Psoas muscle (tissue), 8 donors: ENCODE measurements at regions of chr12 and their contacts with region 1.

Region 1: GRCh38 chr12:89212339-89212771 is 139.9 kb downstream of the DUSP6 start:
- DNase-seq: peak; percentile 20 to 46
- ATAC-seq: peak; percentile 28 to 76 (median 56)
- H3K4me3 ChIP-seq: no peak overlapping the region
- H3K27ac ChIP-seq: peak overlapping the region; percentile 41
- H3K4me1 ChIP-seq: peaks cover 14% of the 10 kb centered on the region
- H3K27me3 ChIP-seq: no peaks in the 10 kb centered on the region
- CTCF ChIP-seq: no peak

Region 2: GRCh38 chr12:88703790-88704189 is 508.6 kb before region 1 on chr12:
- intact Hi-C with region 1: no loop called
- DNase-seq: no peak
- ATAC-seq: no peak
- H3K4me3 ChIP-seq: no peak overlapping the region
- H3K27ac ChIP-seq: no peak overlapping the region
- H3K4me1 ChIP-seq: no peaks in the 10 kb centered on the region
- H3K27me3 ChIP-seq: no peaks in the 10 kb centered on the region
- CTCF ChIP-seq: no peak

Region 3: DNA sequence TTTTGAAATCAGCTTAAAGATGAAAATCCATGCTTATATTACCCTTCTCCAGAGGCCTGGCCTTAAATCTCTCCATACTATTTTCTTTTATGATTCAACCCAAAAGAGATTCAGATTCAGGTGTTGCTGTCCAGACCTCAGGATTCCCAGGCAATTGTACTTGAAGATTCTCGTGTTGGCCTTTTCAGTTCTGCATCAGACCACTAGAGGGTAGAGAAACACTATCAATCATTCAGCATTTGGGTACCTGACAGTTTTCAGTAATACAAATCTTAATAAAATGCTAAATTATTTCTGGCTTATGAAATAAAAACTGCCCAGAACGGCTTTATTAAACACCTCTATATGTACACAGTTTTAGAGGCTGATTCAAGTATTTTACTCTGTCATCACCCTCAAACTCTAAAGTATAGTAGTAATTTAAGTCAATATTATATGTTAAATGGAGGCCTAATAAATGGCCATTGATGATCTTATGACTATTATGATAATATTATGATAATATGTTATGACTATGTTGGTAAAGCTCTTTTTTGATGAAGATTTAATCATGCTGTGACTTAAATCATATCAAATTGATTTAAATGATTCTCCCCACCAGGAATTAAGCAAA is 161.2 kb before region 1 on chr12:
- intact Hi-C with region 1: no loop called
- DNase-seq: no peak
- ATAC-seq: peak; percentile 51 to 82 (median 60)
- H3K4me3 ChIP-seq: no peak overlapping the region
- H3K27ac ChIP-seq: no peak overlapping the region
- H3K4me1 ChIP-seq: no peaks in the 10 kb centered on the region
- H3K27me3 ChIP-seq: no peaks in the 10 kb centered on the region
- CTCF ChIP-seq: peak; percentile 91

Region 4: GRCh38 chr12:89162704-89163261 is 49.6 kb before region 1 on chr12:
- intact Hi-C with region 1: loop called in 1 of 2 experiments (anchors 5 kb)
- DNase-seq: peak; percentile 57 to 64
- ATAC-seq: peak; percentile 69 to 90 (median 88)
- H3K4me3 ChIP-seq: no peak overlapping the region
- H3K27ac ChIP-seq: peak overlapping the region; percentile 69
- H3K4me1 ChIP-seq: peaks cover 7% of the 10 kb centered on the region
- H3K27me3 ChIP-seq: no peaks in the 10 kb centered on the region
- CTCF ChIP-seq: no peak